ENCODE measurements at regions of chr13 and their contacts with region 1.

Region 1: DNA sequence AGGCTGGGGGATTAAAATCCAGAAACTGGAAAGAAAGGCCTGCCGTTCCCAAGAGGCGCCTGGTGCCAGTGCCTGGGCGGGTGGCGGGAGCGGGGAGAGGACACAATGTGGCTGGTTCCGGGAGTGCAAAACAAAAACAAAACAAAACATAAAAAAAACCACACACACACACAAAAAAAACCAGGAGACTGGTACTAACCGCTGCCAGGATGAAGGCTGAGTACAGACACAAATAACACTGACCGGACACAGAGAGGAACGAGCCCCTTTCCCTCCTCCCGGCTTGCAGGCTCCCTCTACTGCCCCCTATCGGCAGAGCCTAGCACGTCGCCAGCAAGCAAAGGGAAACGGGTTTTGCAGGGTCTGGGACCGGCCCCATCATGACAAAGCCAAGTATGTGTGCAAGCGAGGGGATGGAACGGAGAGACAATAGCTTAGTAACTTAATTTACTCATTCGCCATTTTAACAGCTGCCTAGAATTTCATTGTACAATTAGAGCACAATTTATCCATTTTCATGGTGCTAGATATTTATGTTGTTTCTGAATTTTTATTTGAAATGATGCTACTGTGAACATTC is 17.9 kb upstream of the ZDHHC20 start:
- DNase-seq: peak; percentile 83
- H3K4me3 Mint-ChIP-seq: peak overlapping the region; percentile 76
- H3K27ac Mint-ChIP-seq: peak overlapping the region; percentile 60
- H3K4me1 Mint-ChIP-seq: peaks cover 14% of the 10 kb centered on the region
- H3K27me3 Mint-ChIP-seq: no peaks in the 10 kb centered on the region

Region 2: DNA sequence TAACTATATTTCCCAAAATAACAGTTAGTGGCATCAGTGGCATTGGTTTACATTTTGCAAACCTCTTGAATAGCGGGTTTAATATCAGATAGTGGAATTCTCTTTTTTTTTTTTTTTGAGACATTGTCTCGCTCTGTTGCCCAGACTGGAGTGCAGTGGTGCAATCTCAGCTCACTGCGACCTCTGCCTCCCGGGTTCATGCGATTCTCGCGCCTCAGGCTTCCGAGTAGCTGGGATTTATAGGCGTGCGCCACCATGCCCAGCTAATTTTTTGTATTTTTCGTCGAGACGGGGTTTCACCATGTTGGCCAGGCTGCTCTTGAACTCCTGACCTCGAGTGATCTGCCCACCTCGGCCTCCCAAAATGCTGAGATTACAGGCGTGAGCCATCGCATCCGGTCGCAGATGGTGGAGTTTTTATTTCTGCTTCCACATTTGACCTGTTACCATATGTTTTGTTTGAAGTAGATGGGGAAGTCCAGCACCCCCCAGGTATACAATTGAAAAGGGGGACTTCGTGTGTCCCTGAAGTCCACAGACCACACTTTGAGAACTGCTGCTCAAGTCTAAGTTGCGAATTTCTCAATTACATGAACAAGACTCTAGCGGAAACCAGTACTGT is 533.9 kb before region 1 on chr13:
- CTCF ChIA-PET with region 1: interaction called, 13 read pairs
- POLR2A ChIA-PET with region 1: no interaction called
- DNase-seq: no peak
- H3K4me3 Mint-ChIP-seq: no peak overlapping the region
- H3K27ac Mint-ChIP-seq: no peak overlapping the region
- H3K4me1 Mint-ChIP-seq: peaks cover 12% of the 10 kb centered on the region
- H3K27me3 Mint-ChIP-seq: peaks cover 34% of the 10 kb centered on the region

Region 3: GRCh38 chr13:21287331-21287907 is 189.6 kb before region 1 on chr13:
- CTCF ChIA-PET with region 1: interaction called, 11 read pairs
- POLR2A ChIA-PET with region 1: no interaction called
- DNase-seq: no peak
- H3K4me3 Mint-ChIP-seq: no peak overlapping the region
- H3K27ac Mint-ChIP-seq: no peak overlapping the region
- H3K4me1 Mint-ChIP-seq: no peaks in the 10 kb centered on the region
- H3K27me3 Mint-ChIP-seq: peaks cover 19% of the 10 kb centered on the region

Region 4: DNA sequence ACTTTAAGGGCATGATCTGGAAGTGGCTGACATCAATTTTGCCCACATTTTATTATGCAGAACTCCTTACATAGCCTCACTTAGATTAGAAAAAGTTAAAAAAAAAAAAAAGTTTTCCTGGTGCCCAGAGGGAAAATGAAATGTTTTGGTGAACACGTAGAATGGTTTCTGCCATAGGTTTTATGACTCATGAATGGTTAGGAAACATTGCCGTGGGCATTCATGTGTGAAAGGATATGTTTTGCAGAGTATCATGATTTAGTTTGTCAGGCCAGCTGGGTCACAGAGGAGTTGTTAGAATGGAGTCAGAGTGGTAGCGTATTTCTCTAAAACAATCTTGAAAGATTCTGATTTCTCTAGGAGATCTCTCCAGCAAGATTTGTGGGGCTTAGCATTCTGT is 166.8 kb before region 1 on chr13:
- CTCF ChIA-PET with region 1: interaction called, 10 read pairs
- POLR2A ChIA-PET with region 1: no interaction called
- DNase-seq: no peak
- H3K4me3 Mint-ChIP-seq: no peak overlapping the region
- H3K27ac Mint-ChIP-seq: no peak overlapping the region
- H3K4me1 Mint-ChIP-seq: peaks cover 8% of the 10 kb centered on the region
- H3K27me3 Mint-ChIP-seq: no peaks in the 10 kb centered on the region

Region 5: GRCh38 chr13:21399741-21400140 is 77.2 kb before region 1 on chr13:
- CTCF ChIA-PET with region 1: interaction called, 12 read pairs
- POLR2A ChIA-PET with region 1: interaction called, 3 read pairs
- DNase-seq: no peak
- H3K4me3 Mint-ChIP-seq: peak overlapping the region; percentile 28
- H3K27ac Mint-ChIP-seq: peak overlapping the region; percentile 84
- H3K4me1 Mint-ChIP-seq: peaks cover 43% of the 10 kb centered on the region
- H3K27me3 Mint-ChIP-seq: no peaks in the 10 kb centered on the region

Region 6: DNA sequence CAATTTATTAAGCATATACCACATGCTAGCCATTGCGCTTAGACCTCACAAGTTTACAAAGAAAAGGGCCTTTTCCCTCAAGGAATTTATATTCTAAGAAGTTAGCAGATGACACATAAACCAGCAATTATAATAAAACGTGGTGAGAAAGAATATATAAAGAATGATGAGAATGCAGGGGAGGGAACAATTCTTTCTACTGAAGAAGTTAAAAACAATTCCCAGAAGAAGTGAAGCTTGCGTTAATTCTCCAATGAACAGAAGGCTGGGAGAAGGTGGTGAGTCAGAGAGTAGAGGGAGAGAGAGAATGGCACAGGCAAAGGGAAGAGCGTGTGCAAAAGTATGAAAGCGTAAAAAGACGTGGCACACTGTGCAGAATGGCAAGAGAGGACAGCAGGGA is 51.6 kb after region 1 on chr13:
- CTCF ChIA-PET with region 1: no interaction called
- POLR2A ChIA-PET with region 1: no interaction called
- DNase-seq: no peak
- H3K4me3 Mint-ChIP-seq: no peak overlapping the region
- H3K27ac Mint-ChIP-seq: no peak overlapping the region
- H3K4me1 Mint-ChIP-seq: peaks cover 1% of the 10 kb centered on the region
- H3K27me3 Mint-ChIP-seq: no peaks in the 10 kb centered on the region

Region 7: DNA sequence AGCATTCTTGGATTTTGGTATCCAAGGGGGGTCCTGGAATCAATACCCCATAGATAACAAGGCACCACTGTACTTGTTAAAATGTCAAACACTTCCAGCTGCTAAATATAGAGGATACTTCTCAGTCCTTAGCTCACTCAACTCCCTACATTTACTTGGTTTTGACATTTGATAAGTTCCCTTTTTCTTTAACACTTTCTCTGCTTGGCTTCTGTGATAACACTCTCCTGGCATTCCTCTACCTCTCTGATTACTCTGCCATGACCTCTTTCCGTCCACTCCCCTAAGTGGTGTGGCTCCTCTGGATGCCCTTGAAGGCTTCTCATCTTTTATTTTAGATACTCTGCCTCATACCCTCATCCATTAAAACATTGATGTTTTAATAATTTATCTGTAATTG is 61.8 kb after region 1 on chr13:
- CTCF ChIA-PET with region 1: no interaction called
- POLR2A ChIA-PET with region 1: no interaction called
- DNase-seq: no peak
- H3K4me3 Mint-ChIP-seq: no peak overlapping the region
- H3K27ac Mint-ChIP-seq: no peak overlapping the region
- H3K4me1 Mint-ChIP-seq: no peaks in the 10 kb centered on the region
- H3K27me3 Mint-ChIP-seq: no peaks in the 10 kb centered on the region

Region 8: GRCh38 chr13:21595546-21595822 is 118.5 kb after region 1 on chr13:
- CTCF ChIA-PET with region 1: no interaction called
- POLR2A ChIA-PET with region 1: no interaction called
- DNase-seq: no peak
- H3K4me3 Mint-ChIP-seq: no peak overlapping the region
- H3K27ac Mint-ChIP-seq: no peak overlapping the region
- H3K4me1 Mint-ChIP-seq: peaks cover 22% of the 10 kb centered on the region
- H3K27me3 Mint-ChIP-seq: no peaks in the 10 kb centered on the region

Region 9: GRCh38 chr13:22198001-22198400 is 721.0 kb after region 1 on chr13:
- CTCF ChIA-PET with region 1: no interaction called
- POLR2A ChIA-PET with region 1: no interaction called
- DNase-seq: no peak
- H3K4me3 Mint-ChIP-seq: no peak overlapping the region
- H3K27ac Mint-ChIP-seq: no peak overlapping the region
- H3K4me1 Mint-ChIP-seq: no peaks in the 10 kb centered on the region
- H3K27me3 Mint-ChIP-seq: no peaks in the 10 kb centered on the region